Activated CD4-positive, alpha-beta memory T cell treated with anti-CD3 and anti-CD28 coated beads for 36 hours (primary cell): ENCODE measurements at regions of chr6 and their contacts with region 1.

Region 1: GRCh38 chr6:156776840-156777576 is at the start of gene ARID1B:
- DNase-seq: peak; percentile 79
- H3K4me3 Mint-ChIP-seq: peak within 1 kb of the TSS; percentile 83
- H3K27ac Mint-ChIP-seq: peak within 1 kb of the TSS; percentile 95
- H3K4me1 Mint-ChIP-seq: peaks cover 20% of the 10 kb centered on the region
- H3K27me3 Mint-ChIP-seq: no peaks in the 10 kb centered on the region
- total RNA-seq, gene ARID1B: 39.0 to 41.5 TPM

Region 2: DNA sequence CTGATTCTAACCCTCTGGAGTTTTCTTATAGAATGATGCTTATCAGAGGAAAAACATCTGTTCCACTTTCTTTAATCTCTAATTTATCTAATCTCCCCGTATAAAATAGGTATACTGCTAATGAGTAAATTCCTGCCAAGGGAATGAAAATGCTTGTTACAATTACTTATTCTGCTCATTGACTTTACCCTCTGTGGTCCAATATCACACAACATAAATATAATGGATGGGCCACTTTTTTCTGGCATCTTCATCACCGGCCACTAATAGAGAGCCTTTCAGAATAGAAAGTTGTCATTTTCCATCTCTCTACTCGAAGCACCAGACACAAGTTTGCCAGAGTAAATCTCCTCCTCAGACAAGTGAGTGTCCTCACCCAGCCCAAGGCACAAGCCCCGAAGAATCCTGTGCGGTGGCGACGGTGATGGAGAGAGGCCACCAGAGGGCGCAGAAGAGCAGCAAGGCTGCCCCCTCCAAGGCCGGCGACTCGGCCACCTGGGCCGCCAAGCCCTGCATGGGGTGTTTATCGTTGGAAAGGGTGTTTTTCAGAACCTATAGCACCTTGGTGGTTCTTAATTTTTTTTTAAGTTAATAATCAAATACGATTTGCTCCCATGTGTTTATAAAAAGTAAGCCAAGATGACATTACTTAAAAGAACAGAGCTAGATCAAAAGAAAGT is 212.7 kb before region 1 on chr6:
- CTCF ChIA-PET with region 1: no interaction called
- POLR2A ChIA-PET with region 1: no interaction called
- intact Hi-C with region 1: loop called (anchors 5 kb)
- DNase-seq: peak; percentile 87
- H3K4me3 Mint-ChIP-seq: no peak overlapping the region
- H3K27ac Mint-ChIP-seq: peak overlapping the region; percentile 13
- H3K4me1 Mint-ChIP-seq: no peaks in the 10 kb centered on the region
- H3K27me3 Mint-ChIP-seq: peaks cover 19% of the 10 kb centered on the region

Region 3: DNA sequence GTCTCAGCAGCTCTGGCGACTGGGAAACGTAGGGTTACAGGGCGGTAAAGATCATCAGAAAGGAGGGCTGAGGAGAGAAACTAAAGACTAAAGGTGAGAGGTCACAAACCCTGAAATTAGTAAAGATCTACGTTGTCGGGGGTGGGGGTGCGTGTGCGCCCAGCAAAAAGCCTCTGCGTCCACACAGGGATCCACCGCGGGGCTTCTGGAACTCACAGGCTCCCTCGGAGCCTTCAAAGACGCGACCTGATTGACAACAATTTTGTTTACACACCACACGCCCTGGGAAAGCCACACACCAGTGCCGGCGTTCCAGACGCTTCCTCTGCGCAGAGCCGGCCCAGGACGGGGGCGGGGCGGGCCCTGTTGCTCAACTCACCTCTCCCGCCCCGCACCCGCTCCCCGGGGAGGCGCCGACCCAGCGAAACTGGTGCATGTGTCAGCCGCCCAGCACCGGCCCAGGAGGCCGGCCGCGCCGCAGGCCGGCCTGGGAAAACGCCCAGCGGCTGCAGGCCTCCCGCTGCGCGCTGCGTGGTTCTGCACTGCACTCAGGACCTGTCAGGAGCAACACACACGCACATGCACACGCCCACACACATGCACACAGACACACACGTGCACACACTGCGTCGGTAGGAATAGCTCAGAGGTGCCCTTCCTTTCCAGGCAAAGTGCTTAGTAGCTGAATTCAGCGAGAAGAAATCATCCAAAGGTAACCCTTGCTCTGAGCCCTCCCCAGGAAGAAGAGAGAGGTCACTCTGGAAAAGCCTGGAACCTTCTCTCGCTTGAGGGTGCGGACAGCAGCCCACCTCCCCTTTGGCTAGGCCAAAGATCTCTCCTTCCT is 57.1 kb before region 1 on chr6:
- CTCF ChIA-PET with region 1: no interaction called
- POLR2A ChIA-PET with region 1: interaction called, 4 read pairs
- intact Hi-C with region 1: loop called (anchors 2 kb)
- DNase-seq: peak; percentile 80
- H3K4me3 Mint-ChIP-seq: peak overlapping the region; percentile 70
- H3K27ac Mint-ChIP-seq: peak overlapping the region; percentile 54
- H3K4me1 Mint-ChIP-seq: peaks cover 17% of the 10 kb centered on the region
- H3K27me3 Mint-ChIP-seq: no peaks in the 10 kb centered on the region

Region 4: DNA sequence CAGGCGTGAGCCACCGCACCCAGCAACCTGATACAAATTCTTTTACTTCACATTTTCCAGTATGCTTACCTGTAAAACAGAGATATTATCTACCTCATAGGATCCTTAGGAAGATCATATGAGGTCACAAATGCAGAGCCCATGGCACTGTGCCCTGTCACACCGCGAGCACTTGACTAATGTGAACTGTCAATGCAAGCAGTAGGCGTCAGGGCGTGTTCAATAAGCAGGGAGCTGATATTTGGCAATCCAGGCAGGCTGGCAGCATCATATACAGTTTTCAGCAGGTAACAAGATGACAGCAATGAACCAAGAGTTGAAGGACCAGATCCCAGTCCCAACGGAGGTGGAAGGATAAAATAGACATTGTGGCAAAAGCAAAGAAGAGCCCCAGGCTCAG is 14.5 kb before region 1 on chr6:
- CTCF ChIA-PET with region 1: no interaction called
- POLR2A ChIA-PET with region 1: no interaction called
- intact Hi-C with region 1: no loop called
- DNase-seq: no peak
- H3K4me3 Mint-ChIP-seq: no peak overlapping the region
- H3K27ac Mint-ChIP-seq: no peak overlapping the region
- H3K4me1 Mint-ChIP-seq: peaks cover 2% of the 10 kb centered on the region
- H3K27me3 Mint-ChIP-seq: peaks cover 2% of the 10 kb centered on the region

Region 5: DNA sequence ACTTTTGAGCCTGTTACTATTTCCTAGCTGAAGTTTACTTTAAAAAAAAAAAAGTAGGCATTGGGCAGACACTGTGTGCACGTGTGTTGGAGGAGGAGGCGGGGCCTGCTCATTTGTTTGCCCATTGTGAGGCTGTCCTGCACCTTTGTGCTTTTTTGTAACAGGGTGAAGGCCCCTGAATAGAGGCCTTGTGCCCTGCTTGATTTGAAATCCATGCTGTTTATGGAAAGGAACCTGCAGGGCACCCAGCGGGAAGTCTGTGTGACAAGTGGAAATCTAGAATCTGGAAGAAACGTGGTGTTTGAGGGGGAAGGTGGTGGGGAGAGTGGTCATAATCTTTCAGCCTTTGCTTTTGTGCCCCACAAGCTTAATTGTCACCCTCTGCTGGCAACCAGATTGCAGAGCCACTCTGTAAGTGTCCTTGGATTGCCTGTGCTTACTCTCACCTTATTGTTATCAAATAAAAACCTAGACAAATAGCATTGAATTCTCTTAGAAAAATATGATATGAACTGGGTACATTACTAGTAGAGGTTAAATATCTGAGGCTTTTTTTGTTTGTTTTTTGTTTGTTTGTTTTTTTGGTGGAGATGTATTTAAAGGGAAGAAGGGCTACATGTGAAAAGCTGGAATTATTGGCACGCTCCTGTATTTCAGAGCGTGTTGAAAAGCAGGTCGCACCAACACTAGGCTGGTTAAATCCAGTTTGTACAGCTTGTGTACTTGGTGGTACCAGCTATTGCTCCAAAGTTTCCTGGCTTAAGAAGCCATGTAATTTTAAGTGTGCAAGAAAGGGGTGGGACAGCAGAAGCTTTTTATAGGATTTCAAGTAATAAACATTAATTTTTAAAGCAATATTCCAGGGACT is 156.4 kb after region 1 on chr6:
- CTCF ChIA-PET with region 1: no interaction called
- POLR2A ChIA-PET with region 1: no interaction called
- intact Hi-C with region 1: loop called (anchors 2 kb)
- DNase-seq: no peak
- H3K4me3 Mint-ChIP-seq: no peak overlapping the region
- H3K27ac Mint-ChIP-seq: no peak overlapping the region
- H3K4me1 Mint-ChIP-seq: peaks cover 60% of the 10 kb centered on the region
- H3K27me3 Mint-ChIP-seq: no peaks in the 10 kb centered on the region

Region 6: DNA sequence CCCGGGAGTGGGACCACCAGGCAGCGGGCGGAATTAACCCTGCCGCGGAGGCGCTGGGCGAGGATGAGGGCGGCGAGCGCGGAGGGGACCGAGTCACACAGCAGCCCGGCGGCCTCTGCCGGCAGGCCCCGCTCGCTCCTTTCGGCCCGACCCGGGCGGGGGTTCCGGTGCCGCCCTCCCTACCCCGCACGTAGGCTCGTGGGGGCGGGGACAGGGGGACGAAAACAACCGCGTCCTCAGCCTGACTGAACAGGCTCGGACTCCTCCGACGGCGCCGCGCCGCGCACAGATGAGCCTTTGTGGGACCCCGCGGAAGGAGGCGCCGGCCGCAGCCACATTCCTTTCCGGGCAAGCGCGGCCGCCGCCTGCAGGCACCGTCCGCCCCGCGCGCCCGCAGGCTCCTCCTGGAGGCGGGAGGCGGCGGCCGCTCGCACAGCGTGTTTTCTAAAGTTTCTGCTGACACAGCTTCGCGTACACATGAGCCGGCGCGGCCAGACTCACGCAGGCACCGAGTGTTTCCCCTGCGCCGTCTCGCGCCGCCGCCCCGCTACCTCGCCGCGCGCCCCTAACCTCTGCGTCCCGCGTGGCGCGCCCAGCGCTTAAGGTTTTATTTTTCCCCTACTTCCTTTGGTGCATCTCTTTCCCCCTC is 244.5 kb after region 1 on chr6:
- CTCF ChIA-PET with region 1: interaction called, 7 read pairs
- POLR2A ChIA-PET with region 1: interaction called, 24 read pairs
- intact Hi-C with region 1: loop called (anchors 1 kb)
- DNase-seq: peak; percentile 93
- H3K4me3 Mint-ChIP-seq: peak overlapping the region; percentile 87
- H3K27ac Mint-ChIP-seq: peak overlapping the region; percentile 99
- H3K4me1 Mint-ChIP-seq: peaks cover 47% of the 10 kb centered on the region
- H3K27me3 Mint-ChIP-seq: no peaks in the 10 kb centered on the region

Region 7: GRCh38 chr6:157110607-157111006 is 333.6 kb after region 1 on chr6:
- CTCF ChIA-PET with region 1: no interaction called
- POLR2A ChIA-PET with region 1: no interaction called
- intact Hi-C with region 1: no loop called
- DNase-seq: peak; percentile 20
- H3K4me3 Mint-ChIP-seq: no peak overlapping the region
- H3K27ac Mint-ChIP-seq: no peak overlapping the region
- H3K4me1 Mint-ChIP-seq: peaks cover 39% of the 10 kb centered on the region
- H3K27me3 Mint-ChIP-seq: no peaks in the 10 kb centered on the region

Region 8: DNA sequence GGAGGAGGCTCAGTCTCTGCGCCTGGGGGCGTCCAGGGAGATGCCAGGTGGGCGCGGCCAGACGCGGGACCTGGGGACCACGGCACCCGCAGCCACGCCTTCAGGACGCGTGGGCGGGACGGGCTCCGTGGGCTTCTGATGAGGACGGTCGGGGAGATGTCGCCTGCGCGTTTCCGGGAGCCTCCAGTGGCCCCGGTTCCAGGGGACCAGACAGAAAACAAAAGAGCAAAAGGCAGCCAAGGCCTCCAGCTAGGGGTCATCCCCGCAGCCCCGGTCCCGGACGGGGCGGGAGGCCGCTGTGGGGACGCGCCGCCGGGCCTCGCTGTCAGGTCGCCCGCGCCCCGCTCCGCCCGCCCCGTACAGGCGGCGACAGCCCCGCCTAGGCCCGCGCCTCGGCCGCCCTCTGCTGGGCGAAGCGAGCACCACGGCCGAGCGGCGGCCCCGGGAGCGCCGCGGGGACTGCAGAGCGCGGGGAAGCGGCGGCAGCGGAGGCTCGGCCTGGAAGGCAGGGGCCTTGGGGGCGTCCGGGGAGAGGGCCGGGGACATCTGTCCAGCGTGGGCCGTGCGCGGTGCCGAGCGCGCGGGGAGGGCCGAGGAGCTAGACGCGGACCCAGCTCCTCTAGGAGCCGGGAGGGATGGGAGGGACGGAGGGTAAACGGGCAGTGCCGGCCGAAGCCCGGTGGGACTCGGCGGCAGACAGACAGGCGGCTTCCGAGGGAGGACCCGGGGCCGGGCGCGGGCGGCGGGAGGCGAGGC is 497.6 kb after region 1 on chr6:
- CTCF ChIA-PET with region 1: no interaction called
- POLR2A ChIA-PET with region 1: no interaction called
- intact Hi-C with region 1: loop called (anchors 10 kb)
- DNase-seq: peak; percentile 90
- H3K4me3 Mint-ChIP-seq: peak overlapping the region; percentile 76
- H3K27ac Mint-ChIP-seq: peak overlapping the region; percentile 89
- H3K4me1 Mint-ChIP-seq: peaks cover 5% of the 10 kb centered on the region
- H3K27me3 Mint-ChIP-seq: no peaks in the 10 kb centered on the region